ENCODE measurements at regions of chr17 and their contacts with region 1.

Region 1: DNA sequence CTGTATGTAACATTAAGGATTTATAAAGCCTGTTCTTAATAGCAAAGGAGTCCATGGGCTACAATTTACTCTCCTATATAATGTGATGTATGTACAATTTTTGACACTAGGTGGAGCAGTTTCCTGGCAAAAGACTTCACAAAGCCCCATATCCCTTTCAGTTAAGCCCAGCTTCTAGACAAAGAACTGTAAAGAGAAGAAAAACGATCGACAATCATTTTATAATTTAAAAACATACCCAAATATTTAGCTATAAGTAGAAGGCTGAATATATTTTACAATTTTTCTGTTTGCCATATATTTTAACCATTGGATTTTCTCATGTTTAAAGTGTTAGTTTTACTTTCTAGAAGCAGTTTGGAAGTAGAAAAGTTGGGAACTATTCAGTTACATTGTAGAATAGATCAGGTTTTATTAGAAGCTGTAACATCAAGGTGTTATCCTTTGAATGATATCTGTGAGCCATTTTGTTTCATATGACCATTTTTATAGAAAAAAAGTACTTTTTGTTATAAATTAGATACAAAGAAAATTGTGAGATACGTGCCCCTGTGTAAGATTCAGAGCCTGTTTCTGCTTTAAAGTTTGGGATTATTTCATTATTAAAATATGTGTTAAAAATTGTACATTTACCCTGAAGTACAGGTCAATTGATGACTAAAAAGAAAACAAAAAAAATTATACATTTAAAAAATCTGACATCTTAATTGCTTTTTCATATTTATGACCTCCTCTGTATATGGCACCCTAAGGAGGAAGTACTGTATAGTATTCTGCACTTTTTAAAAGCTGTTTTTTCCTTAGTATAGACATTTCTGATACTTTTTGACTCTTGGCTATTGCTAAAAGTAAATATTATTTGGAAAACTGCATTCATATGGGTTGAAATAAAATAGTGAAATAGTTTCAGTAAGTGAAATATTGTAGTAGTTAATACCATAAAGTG is 46.3 kb downstream of the VMP1 start:
- H3K4me3 ChIP-seq: no peak overlapping the region
- H3K27ac ChIP-seq: peak overlapping the region; percentile 28; the same call in 1 of the 2 replicates
- H3K4me1 ChIP-seq: peaks cover 19% of the 10 kb centered on the region
- CTCF ChIP-seq: 0 out of 2 replicates have a peak, but pooled peaks have one; percentile 53

Region 2: DNA sequence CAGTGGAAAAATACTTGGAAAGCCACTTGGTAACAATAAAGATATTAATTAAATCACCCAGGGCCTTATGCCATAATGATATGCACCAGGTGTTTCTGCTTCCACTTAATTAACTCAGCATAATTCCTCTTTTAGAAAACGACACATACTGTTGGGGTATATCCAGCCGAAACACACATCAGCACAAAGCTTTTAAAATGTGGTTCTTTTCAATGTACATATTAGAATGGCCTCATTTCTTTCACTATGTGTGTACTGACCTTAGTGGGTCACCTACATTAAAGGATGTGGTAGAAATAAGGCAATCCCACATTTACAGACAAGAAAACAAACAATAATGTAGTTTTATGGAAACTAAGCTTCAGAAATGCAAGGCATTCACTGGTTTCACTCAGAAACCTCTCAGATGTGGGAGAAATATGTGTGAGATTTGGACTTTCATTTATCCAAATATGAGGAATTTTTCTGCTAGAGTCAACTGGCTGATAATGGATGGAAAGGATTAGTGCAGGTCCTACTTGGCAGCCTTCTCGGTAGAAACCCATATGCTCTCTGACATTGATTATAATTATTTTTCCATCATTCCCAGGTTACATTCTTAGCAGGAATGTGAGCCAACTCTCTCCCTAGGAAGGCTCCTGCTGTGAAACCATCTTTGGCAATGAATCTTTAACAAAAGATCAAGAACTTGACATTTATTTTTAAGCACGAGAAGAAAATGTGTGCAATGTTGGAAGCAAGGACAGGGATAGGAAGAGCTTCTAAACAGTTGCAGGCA is 255.1 kb before region 1 on chr17:
- CTCF ChIA-PET with region 1: no interaction called
- POLR2A ChIA-PET with region 1: no interaction called
- H3K4me3 ChIP-seq: no peak overlapping the region
- H3K27ac ChIP-seq: no peak overlapping the region
- H3K4me1 ChIP-seq: no peaks in the 10 kb centered on the region
- CTCF ChIP-seq: no peak

Region 3: DNA sequence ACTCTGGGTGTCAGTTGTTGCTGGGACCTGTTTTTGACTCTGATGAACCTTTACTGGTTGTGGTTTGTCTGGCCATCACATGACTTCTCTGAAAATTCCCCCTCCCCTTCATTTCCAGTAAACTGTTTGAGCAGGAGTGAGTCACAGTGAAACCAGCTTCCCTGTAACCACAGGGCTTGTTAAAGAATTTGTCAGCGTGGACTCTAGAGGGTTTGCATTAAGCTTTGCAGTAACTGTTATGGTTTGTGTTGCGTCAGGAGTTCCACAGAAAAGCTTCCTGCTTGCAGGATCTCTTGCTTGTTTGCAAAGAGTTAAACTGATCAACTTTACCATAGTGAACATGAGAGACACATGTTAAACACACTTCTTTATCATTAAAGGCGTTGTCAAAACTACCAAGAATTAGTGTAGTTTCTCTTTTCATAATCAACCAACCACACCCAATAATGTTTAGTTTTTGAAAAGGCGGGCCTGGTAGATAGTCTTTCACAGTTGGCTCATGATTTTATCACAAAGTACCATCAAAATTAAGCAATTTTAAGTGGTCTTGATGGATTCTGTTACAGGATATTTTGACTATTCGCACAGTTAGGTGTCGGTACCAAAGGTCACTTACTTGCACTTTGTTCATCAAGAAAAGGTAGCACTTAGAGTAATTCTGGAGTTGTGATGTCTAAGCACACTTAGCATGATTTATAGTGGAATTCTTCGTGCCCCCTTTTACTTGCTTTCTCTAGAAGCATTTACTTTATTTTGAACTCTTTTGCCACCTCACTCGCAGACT is 32.9 kb after region 1 on chr17:
- CTCF ChIA-PET with region 1: interaction called, 14 read pairs
- POLR2A ChIA-PET with region 1: interaction called, 21 read pairs
- H3K4me3 ChIP-seq: peak overlapping the region; percentile 14; the same call in 1 of the 2 replicates
- H3K27ac ChIP-seq: peak overlapping the region; percentile 85
- H3K4me1 ChIP-seq: peaks cover 40% of the 10 kb centered on the region
- CTCF ChIP-seq: no peak

Region 4: GRCh38 chr17:59829217-59830006 is 75.6 kb after region 1 on chr17:
- CTCF ChIA-PET with region 1: interaction called, 19 read pairs
- POLR2A ChIA-PET with region 1: interaction called, 9 read pairs
- H3K4me3 ChIP-seq: peak overlapping the region; percentile 4; the same call in 1 of the 2 replicates
- H3K27ac ChIP-seq: peak overlapping the region; percentile 95
- H3K4me1 ChIP-seq: peaks cover 39% of the 10 kb centered on the region
- CTCF ChIP-seq: no peak

Region 5: GRCh38 chr17:59837308-59838051 is 83.7 kb after region 1 on chr17:
- CTCF ChIA-PET with region 1: interaction called, 73 read pairs
- POLR2A ChIA-PET with region 1: interaction called, 50 read pairs
- H3K4me3 ChIP-seq: peak overlapping the region; percentile 70
- H3K27ac ChIP-seq: peak overlapping the region; percentile 95
- H3K4me1 ChIP-seq: peaks cover 21% of the 10 kb centered on the region
- CTCF ChIP-seq: no peak

Region 6: DNA sequence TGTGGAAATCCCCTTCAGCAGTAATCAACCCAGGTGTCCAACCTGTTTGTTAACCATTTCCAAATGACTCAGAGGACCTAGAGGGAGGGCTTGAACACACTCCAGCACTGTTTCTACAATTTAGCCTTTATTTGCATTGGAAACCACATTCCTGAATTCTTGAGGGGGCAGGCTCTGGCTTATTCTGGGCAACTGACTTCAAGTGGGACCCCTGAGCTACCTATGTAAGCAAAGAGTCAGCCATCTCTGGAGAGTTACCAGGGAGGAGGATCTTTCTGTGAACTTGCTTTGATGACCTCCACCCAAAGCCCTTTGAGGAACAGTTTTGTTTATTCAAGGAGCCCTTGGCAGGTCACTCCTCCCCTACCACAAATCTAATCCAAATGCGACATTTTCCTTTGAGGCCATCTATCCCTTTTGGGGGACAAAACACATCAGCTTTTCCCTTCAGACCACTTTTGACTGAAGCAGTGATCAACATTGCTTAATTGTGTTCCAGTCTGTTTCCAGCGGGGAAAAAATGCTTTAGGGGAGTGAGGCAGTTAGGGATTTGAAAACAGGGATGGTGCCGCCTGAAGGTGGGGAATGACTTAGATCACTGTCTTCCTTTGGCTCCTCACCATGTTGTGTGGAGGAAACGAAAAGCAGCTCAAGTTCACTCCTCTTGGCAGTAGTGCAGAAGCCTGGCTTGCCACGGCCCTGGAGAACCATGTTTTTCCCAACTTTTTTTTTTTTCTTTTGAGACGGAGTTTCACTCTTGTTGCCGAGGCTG is 92.8 kb after region 1 on chr17:
- CTCF ChIA-PET with region 1: interaction called, 73 read pairs
- POLR2A ChIA-PET with region 1: interaction called, 25 read pairs
- H3K4me3 ChIP-seq: no peak overlapping the region
- H3K27ac ChIP-seq: peak overlapping the region; percentile 57
- H3K4me1 ChIP-seq: peaks cover 25% of the 10 kb centered on the region
- CTCF ChIP-seq: no peak

Region 7: DNA sequence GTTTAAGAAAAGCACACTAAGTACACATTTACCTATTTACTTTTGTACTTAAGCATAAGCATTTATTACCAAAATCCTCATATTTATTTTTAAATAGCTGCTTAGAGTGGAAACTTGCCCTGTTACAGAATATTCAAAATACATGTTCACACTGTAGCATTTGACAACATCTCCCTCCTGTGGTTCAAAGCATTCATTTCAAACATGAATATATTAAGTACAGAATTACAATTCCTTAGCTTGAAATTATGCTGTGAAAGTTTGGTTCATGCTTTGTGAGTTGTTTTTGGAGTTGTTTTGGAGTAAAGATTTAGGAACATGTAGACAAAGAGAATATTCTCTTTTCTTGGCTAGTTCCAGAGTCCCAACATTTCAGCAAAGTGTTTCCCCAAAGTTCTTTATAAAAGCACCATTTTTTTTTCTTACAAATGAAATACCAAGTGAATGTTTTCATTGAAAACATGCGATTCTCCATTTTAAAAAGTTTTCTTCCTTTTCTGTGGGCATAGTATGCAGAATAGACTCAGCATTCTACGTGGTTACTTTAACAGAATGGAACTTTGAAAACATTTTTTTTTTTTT is 105.7 kb after region 1 on chr17:
- CTCF ChIA-PET with region 1: interaction called, 9 read pairs
- POLR2A ChIA-PET with region 1: interaction called, 11 read pairs
- H3K4me3 ChIP-seq: no peak overlapping the region
- H3K27ac ChIP-seq: no peak overlapping the region
- H3K4me1 ChIP-seq: no peaks in the 10 kb centered on the region
- CTCF ChIP-seq: no peak

Region 8: DNA sequence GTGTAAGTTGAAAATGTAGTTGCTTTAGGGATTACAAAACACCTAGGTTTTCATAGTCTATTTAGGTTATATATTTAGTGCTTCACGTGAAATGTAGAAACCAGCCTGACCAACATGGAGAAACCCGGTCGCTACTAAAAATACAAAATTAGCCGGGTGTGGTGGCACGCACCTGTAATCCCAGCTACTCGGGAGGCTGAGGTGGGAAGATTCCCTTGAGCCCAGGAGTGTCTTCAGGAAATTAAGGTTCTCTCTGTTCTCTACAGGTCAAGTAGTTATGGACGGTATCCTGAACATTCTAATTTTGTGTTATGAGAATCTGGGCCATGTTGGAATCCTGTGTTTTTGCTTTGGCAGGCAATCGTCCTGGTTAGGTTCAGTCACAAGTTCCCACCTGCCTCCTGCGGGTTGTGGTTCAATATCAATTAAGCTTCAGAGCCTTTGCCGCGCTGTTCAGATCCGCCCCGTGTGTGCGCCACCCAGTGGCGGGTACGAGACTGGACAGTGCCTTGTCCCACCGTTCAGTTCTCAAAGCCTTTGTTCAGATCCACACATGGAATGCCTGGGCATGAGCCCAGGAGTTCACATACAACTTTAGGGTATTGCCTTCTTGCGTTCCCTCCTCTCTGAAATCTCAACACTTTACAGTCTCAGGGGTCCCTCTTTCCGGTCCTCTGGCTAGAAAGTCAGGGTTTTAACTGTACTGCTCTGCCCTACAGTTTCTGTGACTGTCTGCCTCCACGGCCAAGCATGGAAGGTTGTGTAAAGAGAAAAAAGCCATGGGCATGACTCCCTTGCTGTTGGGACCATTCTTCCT is 283.2 kb after region 1 on chr17:
- CTCF ChIA-PET with region 1: interaction called, 37 read pairs
- POLR2A ChIA-PET with region 1: no interaction called
- H3K4me3 ChIP-seq: no peak overlapping the region
- H3K27ac ChIP-seq: no peak overlapping the region
- H3K4me1 ChIP-seq: no peaks in the 10 kb centered on the region
- CTCF ChIP-seq: peak; percentile 87